Prostate gland (tissue), 2 donors: ENCODE measurements at regions of chr5 and their contacts with region 1.

Region 1: DNA sequence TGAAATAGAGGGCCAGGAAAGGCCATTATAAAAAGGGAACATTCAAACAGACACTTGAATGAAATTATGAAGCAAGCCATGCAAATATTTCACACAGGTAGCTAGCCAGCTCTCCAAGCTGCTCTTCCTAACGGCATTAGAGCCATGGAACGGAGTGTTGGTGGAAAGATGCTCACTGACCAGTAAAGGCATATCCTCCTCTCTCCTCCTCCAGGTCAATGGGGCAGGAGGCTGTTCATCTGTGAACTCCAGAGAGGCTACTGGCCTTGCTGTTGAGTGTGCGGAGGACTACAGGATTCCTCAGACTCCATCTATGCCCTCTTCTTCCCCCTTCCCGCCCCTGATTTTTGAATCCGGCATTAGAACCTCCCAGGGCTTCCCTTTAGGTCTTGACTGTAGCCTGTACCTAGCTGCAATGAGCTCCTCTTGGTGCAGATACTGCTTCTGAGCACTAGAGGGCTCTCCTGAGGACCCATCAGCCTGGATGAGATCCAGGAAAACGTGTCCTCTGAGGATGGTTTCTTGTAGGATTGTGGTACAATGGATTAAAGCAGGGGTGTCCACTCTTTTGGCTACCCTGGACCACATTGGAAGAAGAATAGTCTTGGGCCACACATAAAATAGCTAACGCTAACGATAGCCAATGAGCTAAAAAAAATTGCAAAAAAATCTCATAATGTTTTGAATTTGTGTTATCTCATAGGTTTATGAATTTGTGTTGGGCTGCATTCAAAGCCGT is 162.2 kb downstream of the SREK1 start:
- DNase-seq: peak; percentile 47
- H3K4me3 ChIP-seq: no peak overlapping the region
- H3K27ac ChIP-seq: no peak overlapping the region
- H3K4me1 ChIP-seq: no peaks in the 10 kb centered on the region
- H3K27me3 ChIP-seq: no peaks in the 10 kb centered on the region
- CTCF ChIP-seq: peak; percentile 17 to 69 (median 64)
- POLR2A ChIP-seq: no peak

Region 2: GRCh38 chr5:66757188-66757833 is 451.0 kb after region 1 on chr5:
- intact Hi-C with region 1: loop called (anchors 2 kb)
- DNase-seq: peak; percentile 79
- H3K4me3 ChIP-seq: no peak overlapping the region
- H3K27ac ChIP-seq: no peak overlapping the region
- H3K4me1 ChIP-seq: no peaks in the 10 kb centered on the region
- H3K27me3 ChIP-seq: no peaks in the 10 kb centered on the region
- CTCF ChIP-seq: peak; percentile 15 to 80 (median 77)
- POLR2A ChIP-seq: no peak